ENCODE measurements at regions of chr12 and their contacts with region 1.

Region 1: DNA sequence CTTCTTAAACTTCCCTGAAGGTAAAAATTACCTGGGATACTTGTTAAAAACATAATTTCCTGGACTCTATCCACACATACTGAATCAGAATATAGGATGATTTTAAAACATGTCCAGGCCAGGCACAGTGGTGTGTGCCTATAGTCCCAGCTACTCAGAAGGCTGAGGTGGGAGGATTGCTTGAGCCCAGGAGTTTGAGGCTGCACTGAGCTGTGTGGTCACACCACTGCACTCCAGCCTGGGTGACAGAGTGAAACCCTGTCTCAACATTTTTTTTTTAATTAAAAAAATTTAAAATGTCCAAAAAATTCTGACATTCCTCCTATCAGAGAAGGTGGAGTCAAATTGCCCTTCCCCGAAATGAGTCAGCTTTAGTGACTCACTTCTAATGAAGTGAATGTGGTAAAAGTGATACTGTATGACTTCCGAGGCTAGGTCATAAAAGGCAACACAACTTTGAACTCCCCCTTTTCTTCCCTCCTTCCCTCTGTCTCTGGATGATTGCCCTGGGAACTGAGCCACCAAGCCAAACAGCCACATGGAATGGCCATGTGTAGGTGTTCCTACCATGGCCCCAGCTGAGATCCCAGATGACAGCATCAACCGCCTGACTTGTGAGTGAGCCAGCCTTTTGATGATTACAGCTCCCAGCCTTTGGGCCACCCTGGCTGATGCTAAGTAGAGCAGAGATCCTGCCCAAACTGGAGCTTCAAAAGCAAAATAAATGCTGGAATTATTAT is 36.3 kb downstream of the LIMA1 start:
- DNase-seq: peak; percentile 63
- ATAC-seq: peak; percentile 82
- H3K4me3 Mint-ChIP-seq: peak overlapping the region; percentile 70
- H3K27ac Mint-ChIP-seq: peak overlapping the region; percentile 88
- H3K4me1 Mint-ChIP-seq: peaks cover 60% of the 10 kb centered on the region
- H3K27me3 Mint-ChIP-seq: no peaks in the 10 kb centered on the region

Region 2: DNA sequence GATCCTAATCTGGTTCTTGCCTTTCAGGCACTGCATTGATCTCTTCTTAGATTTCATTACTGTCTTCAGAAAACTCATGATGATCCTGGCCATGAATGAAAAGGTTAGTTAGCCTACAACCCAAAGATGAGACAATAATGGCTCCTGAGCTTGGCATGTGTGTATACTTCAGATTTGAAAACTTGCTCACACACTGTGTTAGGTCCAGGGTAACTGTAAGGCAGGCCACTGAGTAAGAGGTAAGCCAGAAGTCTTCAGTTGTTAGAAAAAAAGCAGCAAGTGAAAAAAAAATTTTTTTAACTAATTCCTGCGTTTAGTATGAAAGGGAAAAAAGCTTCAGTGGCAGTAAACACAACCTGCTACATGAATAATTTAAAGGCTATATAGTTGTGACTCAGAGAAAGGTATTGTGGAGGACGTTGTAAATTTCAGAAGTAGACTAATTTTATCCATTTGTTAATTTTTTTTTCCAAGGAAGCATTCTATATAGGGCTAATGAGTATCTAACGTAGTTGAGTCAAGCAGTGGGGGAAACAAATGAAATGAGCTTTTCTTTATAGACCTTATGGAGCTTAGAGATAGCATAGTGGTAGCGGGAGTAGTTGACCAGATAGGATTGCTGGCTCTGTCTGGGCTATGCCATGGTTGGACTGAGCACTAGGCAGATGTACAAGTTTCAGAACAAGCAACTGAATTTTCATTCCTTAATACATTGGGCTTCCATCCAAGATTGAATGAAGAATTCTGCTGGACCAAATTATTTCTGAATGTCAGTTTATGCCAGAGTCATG is 485.2 kb before region 1 on chr12:
- CTCF ChIA-PET with region 1: no interaction called
- POLR2A ChIA-PET with region 1: no interaction called
- intact Hi-C with region 1: no loop called
- DNase-seq: no peak
- ATAC-seq: peak; percentile 52
- H3K4me3 Mint-ChIP-seq: no peak overlapping the region
- H3K27ac Mint-ChIP-seq: peak overlapping the region; percentile 77
- H3K4me1 Mint-ChIP-seq: peaks cover 57% of the 10 kb centered on the region
- H3K27me3 Mint-ChIP-seq: no peaks in the 10 kb centered on the region

Region 3: DNA sequence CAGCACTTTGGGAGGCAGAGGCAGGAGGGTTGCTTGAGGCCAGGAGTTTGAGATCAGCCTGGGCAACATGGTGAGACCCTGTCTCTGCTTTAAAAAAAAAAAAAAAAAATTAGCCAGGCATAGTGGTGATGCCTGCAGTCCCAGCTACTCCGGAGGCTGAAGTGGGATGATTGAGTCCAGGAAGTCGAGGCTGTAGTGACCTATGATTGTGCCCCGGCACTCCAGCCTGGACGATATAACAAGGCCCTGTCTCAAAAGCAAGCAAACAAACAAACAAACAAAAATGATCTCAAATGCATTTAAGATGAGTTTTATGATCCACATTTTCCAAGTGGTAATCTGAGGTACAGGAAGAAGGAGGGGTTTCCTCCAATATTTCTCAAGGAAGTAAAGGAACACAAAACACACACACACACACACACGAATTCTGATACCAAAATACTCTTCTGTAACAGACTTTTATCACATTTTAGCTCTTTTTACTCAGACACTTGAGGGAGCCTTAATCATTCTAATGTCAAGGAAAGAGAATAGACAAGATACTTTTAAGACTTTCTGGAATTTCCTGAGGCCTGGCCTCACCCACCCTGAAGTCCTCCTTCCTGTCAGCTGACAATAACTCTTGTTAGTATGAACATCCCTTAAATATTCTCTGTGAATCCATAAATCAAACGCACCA is 35.5 kb before region 1 on chr12:
- CTCF ChIA-PET with region 1: no interaction called
- POLR2A ChIA-PET with region 1: no interaction called
- intact Hi-C with region 1: loop called in 1 of 2 experiments (anchors 5 kb)
- DNase-seq: no peak
- ATAC-seq: peak; percentile 45
- H3K4me3 Mint-ChIP-seq: peak overlapping the region; percentile 12
- H3K27ac Mint-ChIP-seq: peak overlapping the region; percentile 96
- H3K4me1 Mint-ChIP-seq: peaks cover 46% of the 10 kb centered on the region
- H3K27me3 Mint-ChIP-seq: no peaks in the 10 kb centered on the region

Region 4: DNA sequence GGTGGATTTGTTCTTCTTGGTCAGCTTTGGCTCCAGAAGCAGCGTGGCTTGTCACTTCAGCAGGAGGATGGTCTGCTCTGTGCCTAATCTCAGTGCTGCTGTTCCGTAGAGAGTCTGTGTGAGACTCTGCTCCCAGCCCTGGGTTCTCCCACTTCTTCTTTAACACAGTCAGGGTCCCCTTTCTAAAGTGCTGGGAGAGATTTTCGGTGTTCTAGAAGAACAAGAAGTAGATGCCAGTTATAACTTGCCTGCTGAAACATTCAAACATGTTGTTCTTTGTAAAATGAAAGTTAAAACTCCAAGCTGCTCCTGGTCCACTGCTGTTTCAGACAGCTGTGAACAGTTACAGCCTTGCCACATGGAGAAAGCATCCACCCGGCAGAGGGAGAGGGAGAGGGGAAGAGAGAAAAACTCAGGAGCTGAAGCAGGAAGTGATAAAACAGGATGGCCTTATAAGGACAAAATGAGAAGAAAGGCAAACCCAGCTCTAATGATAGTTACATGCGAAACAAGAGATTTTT is 24.7 kb before region 1 on chr12:
- CTCF ChIA-PET with region 1: interaction called, 14 read pairs
- POLR2A ChIA-PET with region 1: interaction called, 20 read pairs
- intact Hi-C with region 1: loop called (anchors 1 kb)
- DNase-seq: peak; percentile 48
- ATAC-seq: peak; percentile 21
- H3K4me3 Mint-ChIP-seq: no peak overlapping the region
- H3K27ac Mint-ChIP-seq: no peak overlapping the region
- H3K4me1 Mint-ChIP-seq: peaks cover 40% of the 10 kb centered on the region
- H3K27me3 Mint-ChIP-seq: no peaks in the 10 kb centered on the region

Region 5: GRCh38 chr12:50283229-50283923 is 36.3 kb after region 1 on chr12 and contains the start of gene LIMA1:
- CTCF ChIA-PET with region 1: no interaction called
- POLR2A ChIA-PET with region 1: interaction called, 9 read pairs
- intact Hi-C with region 1: loop called (anchors 1 to 2 kb)
- DNase-seq: peak; percentile 96
- ATAC-seq: peak; percentile 98
- H3K4me3 Mint-ChIP-seq: peak within 1 kb of the TSS; percentile 91
- H3K27ac Mint-ChIP-seq: peak within 1 kb of the TSS; percentile 88
- H3K4me1 Mint-ChIP-seq: peaks cover 20% of the 10 kb centered on the region
- H3K27me3 Mint-ChIP-seq: no peaks in the 10 kb centered on the region
- total RNA-seq, gene LIMA1: 69.7 to 90.4 TPM

Measured in activated CD4-positive, alpha-beta T cell treated with anti-CD3 and anti-CD28 coated beads for 36 hours (primary cell).